ENCODE measurements at regions of chr21 and their contacts with region 1.

Region 1: DNA sequence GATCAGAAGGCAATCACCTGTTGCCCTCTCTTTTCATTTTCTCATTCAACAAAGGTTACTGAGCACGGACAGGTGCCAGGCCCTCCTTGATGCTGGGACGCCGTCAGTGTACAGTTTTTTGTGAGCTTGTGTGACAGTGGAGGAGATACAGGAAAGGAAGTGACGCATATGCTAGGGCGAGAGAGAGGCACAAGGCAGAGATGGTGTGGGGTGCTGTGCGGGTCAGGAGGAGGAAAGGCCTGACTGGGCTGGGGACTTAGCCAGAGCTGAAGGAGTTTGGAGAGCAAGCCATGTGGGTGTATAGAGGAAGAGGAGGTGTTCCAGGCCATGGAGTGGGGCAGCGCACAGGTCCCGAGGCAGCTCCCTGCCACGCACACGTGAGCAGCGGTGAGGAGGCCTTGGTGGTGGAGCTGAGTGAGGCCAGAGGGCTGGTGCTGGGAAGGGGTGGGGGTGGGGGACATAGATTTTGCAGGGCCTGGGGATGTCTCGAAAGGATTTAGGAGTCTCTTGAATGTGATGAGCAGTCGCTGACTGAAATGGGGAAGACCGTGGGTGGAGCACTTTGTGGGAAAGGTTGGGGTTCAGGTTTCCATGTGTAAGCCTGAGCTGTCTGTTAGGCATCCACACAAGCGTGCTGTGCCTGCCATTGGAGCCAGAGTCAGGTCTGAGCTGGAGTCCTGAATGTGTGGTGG is 46.0 kb downstream of the TRAPPC10 start:
- DNase-seq: peak in 9 of 14 experiments; percentile 11 to 70 (median 33)
- ATAC-seq: peak; percentile 83
- H3K4me3 ChIP-seq: peak overlapping the region; percentile 27
- H3K4me3 Mint-ChIP-seq: peak overlapping the region; percentile 85
- H3K27ac ChIP-seq: peak overlapping the region; percentile 54 to 70
- H3K27ac Mint-ChIP-seq: peak overlapping the region; percentile 95
- H3K4me1 ChIP-seq: peaks cover 15% of the 10 kb centered on the region
- H3K4me1 Mint-ChIP-seq: peaks cover 15% of the 10 kb centered on the region
- H3K27me3 ChIP-seq: no peaks in the 10 kb centered on the region
- H3K27me3 Mint-ChIP-seq: no peaks in the 10 kb centered on the region
- CTCF ChIP-seq: no peak

Region 2: GRCh38 chr21:43854773-43855633 is 203.1 kb before region 1 on chr21:
- CTCF ChIA-PET with region 1: no interaction called
- POLR2A ChIA-PET with region 1: no interaction called
- intact Hi-C with region 1: no loop called
- DNase-seq: peak in 3 of 14 experiments; percentile 27 to 48 (median 46)
- ATAC-seq: peak; percentile 21
- H3K4me3 ChIP-seq: no peak overlapping the region
- H3K4me3 Mint-ChIP-seq: no peak overlapping the region
- H3K27ac ChIP-seq: no peak overlapping the region
- H3K27ac Mint-ChIP-seq: no peak overlapping the region
- H3K4me1 ChIP-seq: peaks cover 5% of the 10 kb centered on the region
- H3K4me1 Mint-ChIP-seq: no peaks in the 10 kb centered on the region
- H3K27me3 ChIP-seq: peaks cover 0 to 2% of the 10 kb centered on the region in 2 experiments
- H3K27me3 Mint-ChIP-seq: peaks cover 9% of the 10 kb centered on the region
- CTCF ChIP-seq: no peak

Region 3: DNA sequence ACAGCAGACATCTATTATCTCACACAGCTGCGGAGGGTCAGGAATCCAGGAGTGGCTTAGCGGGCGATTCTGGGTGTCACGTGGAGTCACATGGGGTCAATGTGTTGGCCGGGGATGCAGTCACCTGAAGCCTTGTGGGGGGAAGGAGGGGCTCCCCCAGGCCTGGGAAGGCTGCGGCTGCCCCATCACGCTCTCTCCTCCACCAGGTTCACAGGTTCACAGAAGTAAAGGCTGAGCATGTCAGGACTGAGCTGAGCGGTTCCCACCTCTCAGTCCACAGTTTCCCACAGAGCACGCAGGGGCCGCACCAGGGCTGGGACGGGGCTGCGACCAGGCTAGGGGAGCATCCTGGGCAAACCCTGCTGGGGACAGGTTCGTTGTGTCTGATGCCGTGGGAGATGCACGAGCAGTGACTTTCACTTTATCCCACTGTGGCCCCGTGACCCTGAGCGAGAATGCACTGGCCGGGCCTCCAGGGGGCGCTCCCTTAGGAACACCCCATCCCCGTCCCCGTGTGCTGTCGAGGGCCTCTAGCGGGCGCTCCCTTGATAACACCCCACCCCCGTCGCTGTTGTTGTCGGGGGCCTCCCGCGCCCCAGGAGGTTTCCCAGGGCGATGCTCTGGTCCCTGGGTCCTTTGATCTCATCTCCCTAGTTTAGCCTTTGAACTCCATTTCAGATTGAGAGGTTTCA is 119.2 kb before region 1 on chr21:
- CTCF ChIA-PET with region 1: no interaction called
- POLR2A ChIA-PET with region 1: no interaction called
- intact Hi-C with region 1: no loop called
- DNase-seq: peak; percentile 86 to 94 (median 90)
- ATAC-seq: peak; percentile 100
- H3K4me3 ChIP-seq: peak overlapping the region; percentile 62
- H3K4me3 Mint-ChIP-seq: peak overlapping the region; percentile 88
- H3K27ac ChIP-seq: peak overlapping the region in 1 of 2 donors; percentile 12
- H3K27ac Mint-ChIP-seq: peak overlapping the region; percentile 82
- H3K4me1 ChIP-seq: peaks cover 20% of the 10 kb centered on the region
- H3K4me1 Mint-ChIP-seq: peaks cover 19% of the 10 kb centered on the region
- H3K27me3 ChIP-seq: no peaks in the 10 kb centered on the region
- H3K27me3 Mint-ChIP-seq: no peaks in the 10 kb centered on the region
- CTCF ChIP-seq: peak; percentile 99

Region 4: DNA sequence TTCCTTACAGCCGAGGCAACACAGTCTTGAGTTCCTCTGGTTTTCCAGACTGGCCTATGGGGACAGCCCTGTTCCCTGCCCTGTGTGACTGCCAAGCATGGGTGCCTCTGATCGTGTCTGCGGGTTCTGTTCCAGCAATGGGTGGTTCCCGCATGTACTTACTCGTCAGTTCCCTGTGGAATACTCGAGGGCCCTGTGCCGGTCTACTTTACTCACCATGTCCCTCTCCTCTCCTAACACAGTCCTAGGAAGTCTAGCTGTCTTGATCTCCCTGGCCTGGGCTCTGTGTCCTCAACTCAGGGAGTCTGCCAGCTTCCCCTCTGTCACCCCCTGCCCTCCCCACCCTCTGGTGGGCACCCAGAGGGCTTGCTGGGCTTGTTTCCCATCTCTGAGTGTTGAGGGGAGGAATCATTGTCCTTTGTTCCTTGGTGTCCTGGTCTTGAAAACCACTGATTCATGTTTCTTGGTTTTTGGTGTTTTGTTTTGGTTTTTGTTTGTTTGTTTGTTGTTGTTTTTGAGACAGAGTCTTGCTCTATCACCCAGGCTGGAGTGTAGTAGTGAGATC is 10.0 kb before region 1 on chr21:
- CTCF ChIA-PET with region 1: no interaction called
- POLR2A ChIA-PET with region 1: no interaction called
- intact Hi-C with region 1: no loop called
- DNase-seq: no peak
- ATAC-seq: no peak
- H3K4me3 ChIP-seq: no peak overlapping the region
- H3K4me3 Mint-ChIP-seq: no peak overlapping the region
- H3K27ac ChIP-seq: no peak overlapping the region
- H3K27ac Mint-ChIP-seq: peak overlapping the region; percentile 4
- H3K4me1 ChIP-seq: peaks cover 13% of the 10 kb centered on the region
- H3K4me1 Mint-ChIP-seq: peaks cover 27% of the 10 kb centered on the region
- H3K27me3 ChIP-seq: no peaks in the 10 kb centered on the region
- H3K27me3 Mint-ChIP-seq: no peaks in the 10 kb centered on the region
- CTCF ChIP-seq: no peak

Region 5: DNA sequence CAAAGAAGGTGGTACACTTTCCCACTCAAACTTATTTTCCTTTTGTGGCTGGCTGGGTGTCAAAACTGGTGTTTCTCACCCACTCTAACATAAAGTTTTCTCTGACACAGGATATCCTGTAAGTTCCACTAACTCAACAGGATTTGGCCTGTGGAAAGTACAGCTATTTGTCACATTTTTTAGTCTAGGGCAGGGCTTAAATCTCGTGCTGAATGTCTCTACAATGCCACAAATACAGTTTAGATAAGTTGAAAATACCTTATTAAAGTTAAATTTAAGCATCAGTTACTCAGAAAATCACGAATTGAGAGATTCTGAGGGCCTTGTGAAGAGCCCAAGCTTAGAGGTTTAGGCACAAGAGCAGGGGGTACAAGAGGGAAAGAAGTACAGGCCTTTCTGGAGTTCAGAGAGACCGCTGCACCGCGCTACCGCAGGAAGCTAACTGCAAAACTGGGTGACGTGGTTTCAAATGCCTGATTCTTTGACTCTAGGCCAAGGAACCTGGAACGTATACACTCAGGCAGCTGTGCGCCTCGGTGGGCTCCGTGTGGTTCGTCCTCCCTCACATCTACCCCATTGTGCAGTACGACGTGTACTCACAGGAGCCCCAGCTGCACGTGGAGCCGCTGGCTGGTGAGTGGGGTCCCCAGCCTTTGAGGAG is 25.7 kb after region 1 on chr21:
- CTCF ChIA-PET with region 1: interaction called, 4 read pairs
- POLR2A ChIA-PET with region 1: interaction called, 49 read pairs
- intact Hi-C with region 1: no loop called
- DNase-seq: peak; percentile 44 to 90 (median 66)
- ATAC-seq: peak; percentile 81
- H3K4me3 ChIP-seq: peak overlapping the region; percentile 41
- H3K4me3 Mint-ChIP-seq: peak overlapping the region; percentile 69
- H3K27ac ChIP-seq: peak overlapping the region; percentile 80 to 91
- H3K27ac Mint-ChIP-seq: peak overlapping the region; percentile 95
- H3K4me1 ChIP-seq: peaks cover 96% of the 10 kb centered on the region
- H3K4me1 Mint-ChIP-seq: peaks cover 85% of the 10 kb centered on the region
- H3K27me3 ChIP-seq: no peaks in the 10 kb centered on the region
- H3K27me3 Mint-ChIP-seq: no peaks in the 10 kb centered on the region
- CTCF ChIP-seq: no peak